MCF 10A (cell line): ENCODE measurements at regions of chr1 and their contacts with region 1.

Region 1: GRCh38 chr1:149886396-149887195 is 12.8 kb upstream of the BOLA1 start:
- DNase-seq: peak; percentile 100
- H3K4me3 Mint-ChIP-seq: no peak overlapping the region
- H3K27ac Mint-ChIP-seq: no peak overlapping the region
- H3K4me1 Mint-ChIP-seq: no peaks in the 10 kb centered on the region
- H3K27me3 Mint-ChIP-seq: no peaks in the 10 kb centered on the region
- CTCF ChIP-seq: no peak

Region 2: GRCh38 chr1:149844101-149844500 is 42.5 kb before region 1 on chr1:
- CTCF ChIA-PET with region 1: interaction called, 8 read pairs
- POLR2A ChIA-PET with region 1: interaction called, 632 read pairs
- intact Hi-C with region 1: no loop called
- DNase-seq: peak; percentile 80
- H3K4me3 Mint-ChIP-seq: peak overlapping the region; percentile 93
- H3K27ac Mint-ChIP-seq: peak overlapping the region; percentile 65
- H3K4me1 Mint-ChIP-seq: peaks cover 52% of the 10 kb centered on the region
- H3K27me3 Mint-ChIP-seq: no peaks in the 10 kb centered on the region
- CTCF ChIP-seq: no peak

Region 3: GRCh38 chr1:149927503-149928387 is 41.1 kb after region 1 on chr1 and contains the start of gene SF3B4:
- CTCF ChIA-PET with region 1: interaction called, 4 read pairs
- POLR2A ChIA-PET with region 1: interaction called, 228 read pairs
- intact Hi-C with region 1: loop called (anchors 2 kb)
- DNase-seq: peak; percentile 98
- H3K4me3 Mint-ChIP-seq: peak within 1 kb of the TSS; percentile 99
- H3K27ac Mint-ChIP-seq: peak within 1 kb of the TSS; percentile 87
- H3K4me1 Mint-ChIP-seq: peaks cover 71% of the 10 kb centered on the region
- H3K27me3 Mint-ChIP-seq: no peaks in the 10 kb centered on the region
- CTCF ChIP-seq: no peak
- total RNA-seq, gene SF3B4: 79.2 and 99.2 TPM in 2 replicates

Region 4: GRCh38 chr1:149978547-149979023 is 92.0 kb after region 1 on chr1:
- CTCF ChIA-PET with region 1: no interaction called
- POLR2A ChIA-PET with region 1: interaction called, 14 read pairs
- intact Hi-C with region 1: no loop called
- DNase-seq: peak; percentile 59
- H3K4me3 Mint-ChIP-seq: no peak overlapping the region
- H3K27ac Mint-ChIP-seq: peak overlapping the region; percentile 5
- H3K4me1 Mint-ChIP-seq: peaks cover 13% of the 10 kb centered on the region
- H3K27me3 Mint-ChIP-seq: no peaks in the 10 kb centered on the region
- CTCF ChIP-seq: no peak

Region 5: DNA sequence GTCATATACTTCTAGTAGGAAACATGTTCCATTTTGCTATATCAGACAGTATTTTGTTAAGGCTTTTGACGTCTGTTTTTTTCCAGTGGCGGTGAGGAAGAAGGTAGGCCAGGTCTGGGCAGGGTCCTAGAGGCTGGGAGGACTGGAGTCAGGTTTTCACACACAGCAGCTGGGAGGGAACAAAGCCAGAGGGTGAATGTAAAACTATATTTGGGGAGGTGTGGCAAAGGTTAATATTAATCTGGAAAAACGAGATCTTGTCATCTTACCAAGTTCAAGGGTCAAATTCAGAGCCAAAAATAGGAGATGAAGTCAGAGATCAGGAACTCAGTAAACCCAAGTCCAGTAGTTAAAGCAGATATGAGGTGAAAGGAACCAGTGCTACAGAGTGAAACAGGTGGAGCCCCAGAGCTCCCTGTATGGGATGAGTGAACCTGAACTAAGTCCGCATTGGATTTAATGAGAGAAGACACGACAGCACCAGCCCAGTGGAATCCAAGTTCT is 134.6 kb after region 1 on chr1:
- CTCF ChIA-PET with region 1: no interaction called
- POLR2A ChIA-PET with region 1: interaction called, 12 read pairs
- intact Hi-C with region 1: no loop called
- DNase-seq: no peak
- H3K4me3 Mint-ChIP-seq: no peak overlapping the region
- H3K27ac Mint-ChIP-seq: peak overlapping the region; percentile 65
- H3K4me1 Mint-ChIP-seq: peaks cover 10% of the 10 kb centered on the region
- H3K27me3 Mint-ChIP-seq: no peaks in the 10 kb centered on the region
- CTCF ChIP-seq: no peak

Region 6: DNA sequence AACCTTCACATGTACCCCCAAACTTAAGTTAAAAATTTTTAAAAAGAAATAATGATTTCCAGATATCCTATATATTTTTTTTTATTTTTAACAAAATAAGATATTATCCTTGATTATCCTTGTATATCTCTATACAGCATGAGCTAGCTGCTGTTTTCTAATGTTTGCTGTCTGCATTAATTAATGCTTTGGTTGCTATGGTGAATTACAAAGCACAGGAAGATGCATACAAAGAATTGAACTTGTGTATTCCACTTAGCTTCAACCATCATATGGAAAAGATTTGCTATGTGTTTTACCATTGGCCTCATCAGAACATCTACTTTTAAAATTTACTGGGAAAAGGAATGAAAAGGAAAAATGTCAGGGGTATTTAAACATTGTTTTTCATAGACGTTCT is 216.4 kb after region 1 on chr1:
- CTCF ChIA-PET with region 1: no interaction called
- POLR2A ChIA-PET with region 1: no interaction called
- intact Hi-C with region 1: no loop called
- DNase-seq: no peak
- H3K4me3 Mint-ChIP-seq: no peak overlapping the region
- H3K27ac Mint-ChIP-seq: no peak overlapping the region
- H3K4me1 Mint-ChIP-seq: no peaks in the 10 kb centered on the region
- H3K27me3 Mint-ChIP-seq: no peaks in the 10 kb centered on the region
- CTCF ChIP-seq: no peak

Region 7: GRCh38 chr1:150168960-150169601 is 282.5 kb after region 1 on chr1:
- CTCF ChIA-PET with region 1: interaction called, 4 read pairs
- POLR2A ChIA-PET with region 1: interaction called, 7 read pairs
- intact Hi-C with region 1: loop called (anchors 1 kb)
- DNase-seq: peak; percentile 82
- H3K4me3 Mint-ChIP-seq: no peak overlapping the region
- H3K27ac Mint-ChIP-seq: no peak overlapping the region
- H3K4me1 Mint-ChIP-seq: no peaks in the 10 kb centered on the region
- H3K27me3 Mint-ChIP-seq: no peaks in the 10 kb centered on the region
- CTCF ChIP-seq: peak; percentile 88

Region 8: DNA sequence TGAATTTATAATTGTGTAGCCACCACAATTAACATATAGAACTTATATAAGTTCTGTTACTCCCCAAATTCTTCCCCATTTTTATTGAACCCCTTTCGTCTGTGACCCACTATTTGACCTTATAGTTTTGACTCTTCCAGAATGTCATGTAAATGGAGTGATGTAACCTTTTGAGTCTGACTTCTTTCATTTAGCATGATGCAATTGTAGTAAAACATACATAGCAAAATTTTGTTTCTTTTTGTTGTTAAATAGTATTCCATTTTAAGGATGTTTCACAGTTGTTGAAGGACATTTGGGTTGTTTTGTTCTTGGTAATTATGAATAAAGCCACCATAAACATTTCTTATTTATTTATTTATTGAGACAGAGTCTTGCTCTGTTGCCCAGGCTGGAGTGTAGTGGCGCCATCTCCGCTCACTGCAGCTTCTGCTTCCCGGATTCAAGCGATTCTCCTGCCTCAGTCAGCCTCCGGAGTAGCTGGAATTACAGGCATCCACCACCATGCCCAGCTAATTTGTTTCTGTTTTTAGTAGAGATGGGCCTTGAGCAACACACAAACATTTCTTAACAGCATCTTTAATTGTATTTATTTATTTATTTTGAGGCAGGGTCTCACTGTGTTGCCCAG is 510.9 kb after region 1 on chr1:
- CTCF ChIA-PET with region 1: no interaction called
- POLR2A ChIA-PET with region 1: no interaction called
- intact Hi-C with region 1: no loop called
- DNase-seq: no peak
- H3K4me3 Mint-ChIP-seq: no peak overlapping the region
- H3K27ac Mint-ChIP-seq: no peak overlapping the region
- H3K4me1 Mint-ChIP-seq: peaks cover 6% of the 10 kb centered on the region
- H3K27me3 Mint-ChIP-seq: no peaks in the 10 kb centered on the region
- CTCF ChIP-seq: no peak

Region 9: GRCh38 chr1:150578965-150579798 is 692.6 kb after region 1 on chr1 and contains the start of gene MCL1:
- CTCF ChIA-PET with region 1: no interaction called
- POLR2A ChIA-PET with region 1: interaction called, 20 read pairs
- intact Hi-C with region 1: no loop called
- DNase-seq: peak; percentile 98
- H3K4me3 Mint-ChIP-seq: peak within 1 kb of the TSS; percentile 99
- H3K27ac Mint-ChIP-seq: peak within 1 kb of the TSS; percentile 99
- H3K4me1 Mint-ChIP-seq: peaks cover 35% of the 10 kb centered on the region
- H3K27me3 Mint-ChIP-seq: no peaks in the 10 kb centered on the region
- CTCF ChIP-seq: no peak
- total RNA-seq, gene MCL1: 497 and 624 TPM in 2 replicates